Activated T-helper 1 cell treated with anti-CD3 and anti-CD28 coated beads, Interleukin-12 subunit alpha, Interleukin-12 subunit beta, Interleukin-2, Interleukin-4 antibody, amounts not matched to agents 30 ng/mL and 10 ng/mL and 1 ng/mL, durations not matched to agents 14 hours and 24 hours and 36 hours (primary cell): ENCODE measurements at regions of chr7 and their contacts with region 1.

Region 1: DNA sequence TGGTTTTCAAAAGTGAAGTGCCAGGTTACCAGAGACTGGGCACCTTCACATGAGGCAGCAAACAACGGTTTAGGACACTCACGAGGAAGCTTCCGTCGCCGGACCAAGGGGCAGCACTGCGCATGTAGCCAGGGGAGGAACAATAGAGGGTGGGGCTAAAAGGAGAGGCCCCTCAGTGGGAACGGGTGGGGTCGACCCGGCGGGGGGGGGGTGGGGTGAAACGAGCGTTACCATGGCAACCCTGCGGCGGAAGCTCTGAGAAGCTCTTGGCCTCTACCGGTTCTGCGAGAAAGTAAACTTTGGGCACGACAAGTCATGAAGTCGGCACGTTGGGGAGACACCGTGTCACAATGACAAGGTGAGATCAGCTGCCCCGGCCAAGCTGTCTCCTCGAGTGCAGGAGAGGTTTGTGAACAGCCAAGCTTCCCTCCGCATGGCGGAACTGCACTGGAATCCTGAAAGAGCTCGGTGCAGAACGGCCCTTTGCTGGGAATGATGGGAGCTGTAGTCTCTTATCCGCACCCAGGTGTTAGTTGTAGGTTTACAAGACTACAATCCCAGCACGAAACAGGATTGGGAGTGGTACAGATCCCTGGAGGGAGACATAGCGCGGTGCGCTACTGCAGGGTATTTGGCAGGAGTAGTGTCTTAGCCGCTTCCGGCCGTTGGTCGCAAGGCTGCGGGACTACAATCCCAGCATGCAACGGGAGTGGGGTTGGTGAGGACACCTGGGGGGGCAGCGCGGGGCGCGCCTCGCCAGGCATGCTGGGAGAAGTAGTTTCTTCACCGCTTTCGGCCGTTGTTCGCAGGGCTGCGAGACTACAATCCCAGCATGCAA is 72.8 kb upstream of the ZNF722 start:
- DNase-seq: peak; percentile 74
- H3K4me3 Mint-ChIP-seq: peak overlapping the region; percentile 89
- H3K27ac Mint-ChIP-seq: peak overlapping the region; percentile 89
- H3K4me1 Mint-ChIP-seq: peaks cover 6% of the 10 kb centered on the region
- H3K27me3 Mint-ChIP-seq: no peaks in the 10 kb centered on the region

Region 2: GRCh38 chr7:63876707-63877322 is 49.0 kb before region 1 on chr7:
- intact Hi-C with region 1: no loop called
- DNase-seq: no peak
- H3K4me3 Mint-ChIP-seq: no peak overlapping the region
- H3K27ac Mint-ChIP-seq: no peak overlapping the region
- H3K4me1 Mint-ChIP-seq: no peaks in the 10 kb centered on the region
- H3K27me3 Mint-ChIP-seq: no peaks in the 10 kb centered on the region

Region 3: GRCh38 chr7:63900394-63901203 is 25.2 kb before region 1 on chr7:
- intact Hi-C with region 1: loop called (anchors 1 kb)
- DNase-seq: peak; percentile 62
- H3K4me3 Mint-ChIP-seq: peak overlapping the region; percentile 87
- H3K27ac Mint-ChIP-seq: peak overlapping the region; percentile 67
- H3K4me1 Mint-ChIP-seq: no peaks in the 10 kb centered on the region
- H3K27me3 Mint-ChIP-seq: no peaks in the 10 kb centered on the region

Region 4: GRCh38 chr7:64313740-64314491 is 388.1 kb after region 1 on chr7 and contains the start of gene ZNF736:
- intact Hi-C with region 1: loop called (anchors 1 kb)
- DNase-seq: peak; percentile 82
- H3K4me3 Mint-ChIP-seq: peak within 1 kb of the TSS; percentile 96
- H3K27ac Mint-ChIP-seq: peak within 1 kb of the TSS; percentile 95
- H3K4me1 Mint-ChIP-seq: peaks cover 25% of the 10 kb centered on the region
- H3K27me3 Mint-ChIP-seq: no peaks in the 10 kb centered on the region
- total RNA-seq, gene ZNF736: 19.8 and 21.3 TPM in 2 replicates